ENCODE measurements at regions of chr18 and their contacts with region 1.

Region 1: DNA sequence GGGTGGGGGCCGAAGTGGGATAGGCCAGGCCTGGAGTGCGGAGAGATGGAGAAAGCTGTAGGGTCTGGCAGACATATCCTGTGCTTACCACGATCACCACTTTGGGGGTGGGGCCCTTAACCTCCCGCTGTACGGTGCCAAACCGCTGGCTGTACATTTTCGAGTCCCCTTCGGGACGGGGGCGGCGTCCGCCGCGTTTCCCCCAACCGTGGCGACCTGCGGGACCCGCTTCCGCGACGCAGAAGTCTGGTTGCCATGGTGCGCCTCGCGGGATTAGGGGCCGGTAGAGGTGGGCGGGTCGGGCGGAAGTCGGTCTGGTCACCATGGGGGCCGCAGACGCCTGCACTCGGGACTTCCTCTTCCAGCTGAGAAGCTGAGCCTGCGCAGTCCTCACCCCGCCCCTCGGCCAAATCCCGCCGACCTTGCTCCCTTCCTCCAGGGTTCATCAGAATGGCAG is at the start of gene CFAP53:
- DNase-seq: peak; percentile 84
- ATAC-seq: peak; percentile 100
- H3K4me3 ChIP-seq: peak within 1 kb of the TSS; percentile 84
- H3K27ac ChIP-seq: peak within 1 kb of the TSS; percentile 21; the same call in 1 of the 2 replicates
- H3K4me1 ChIP-seq: no peaks in the 10 kb centered on the region
- H3K27me3 ChIP-seq: no peaks in the 10 kb centered on the region
- CTCF ChIP-seq: no peak
- POLR2A ChIP-seq: peak; percentile 21; the same call in 1 of the 2 replicates
- RAD21 ChIP-seq: no peak
- total RNA-seq, gene CFAP53: under 0.01 TPM in 2 replicates

Region 2: GRCh38 chr18:48859311-48860268 is 1406.7 kb before region 1 on chr18:
- CTCF ChIA-PET with region 1: no interaction called
- POLR2A ChIA-PET with region 1: interaction called, 19 read pairs
- dilution Hi-C with region 1: no loop called
- in situ Hi-C with region 1: no loop called
- intact Hi-C with region 1: no loop called
- DNase-seq: no peak
- ATAC-seq: no peak
- H3K4me3 ChIP-seq: no peak overlapping the region
- H3K27ac ChIP-seq: no peak overlapping the region
- H3K4me1 ChIP-seq: peaks cover 4% of the 10 kb centered on the region; the same call in 1 of the 2 replicates
- H3K27me3 ChIP-seq: no peaks in the 10 kb centered on the region
- CTCF ChIP-seq: no peak
- POLR2A ChIP-seq: no peak
- RAD21 ChIP-seq: no peak

Region 3: DNA sequence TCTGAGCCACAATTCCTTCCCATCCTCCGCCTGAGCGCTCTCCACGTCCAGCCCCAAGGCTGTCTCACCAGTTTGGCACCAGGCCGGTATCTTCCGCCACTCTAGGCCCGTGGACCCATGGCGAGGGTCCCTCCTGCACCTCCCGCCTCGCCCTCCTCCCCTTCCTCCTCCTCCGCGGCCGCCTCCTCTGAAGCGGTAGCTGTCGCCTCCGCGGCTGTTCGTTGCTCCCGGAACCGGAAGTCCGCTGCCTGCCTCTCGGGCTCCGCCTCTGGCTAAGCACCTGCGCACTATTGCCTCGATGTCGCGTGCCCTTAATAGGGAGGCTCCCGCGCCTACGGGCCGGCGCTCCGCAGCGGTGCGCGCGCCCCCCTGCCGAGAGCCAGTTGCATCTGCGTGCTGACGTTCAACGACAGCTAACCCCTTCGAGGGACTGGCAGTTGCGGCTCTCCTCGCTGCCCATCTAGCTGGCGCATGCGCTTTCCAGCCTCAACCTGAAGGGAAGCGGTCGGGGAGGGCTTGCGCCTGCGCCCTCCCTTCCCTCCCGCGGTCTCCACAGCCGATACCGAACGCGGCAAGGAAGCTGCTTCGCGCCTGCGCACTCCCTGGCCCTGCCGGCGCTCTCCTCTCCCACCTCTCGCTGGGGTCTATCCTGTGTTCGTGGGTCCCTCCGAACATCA is 15.2 kb after region 1 on chr18 and contains the start of gene MBD1:
- CTCF ChIA-PET with region 1: no interaction called
- POLR2A ChIA-PET with region 1: no interaction called
- dilution Hi-C with region 1: no loop called
- in situ Hi-C with region 1: no loop called
- intact Hi-C with region 1: loop called (anchors 1 kb)
- DNase-seq: peak; percentile 99
- ATAC-seq: peak; percentile 94
- H3K4me3 ChIP-seq: peak within 1 kb of the TSS; percentile 80
- H3K27ac ChIP-seq: peak within 1 kb of the TSS; percentile 94
- H3K4me1 ChIP-seq: peaks cover 9% of the 10 kb centered on the region
- H3K27me3 ChIP-seq: no peaks in the 10 kb centered on the region
- CTCF ChIP-seq: 0 out of 2 replicates have a peak, but pooled peaks have one; percentile 20
- POLR2A ChIP-seq: peak; percentile 87
- RAD21 ChIP-seq: no peak
- total RNA-seq, gene MBD1: 31.7 TPM in 2 replicates

Region 4: GRCh38 chr18:51833850-51834249 is 1567.6 kb after region 1 on chr18:
- CTCF ChIA-PET with region 1: no interaction called
- POLR2A ChIA-PET with region 1: no interaction called
- dilution Hi-C with region 1: no loop called
- in situ Hi-C with region 1: no loop called
- intact Hi-C with region 1: no loop called
- DNase-seq: no peak
- ATAC-seq: no peak
- H3K4me3 ChIP-seq: no peak overlapping the region
- H3K27ac ChIP-seq: no peak overlapping the region
- H3K4me1 ChIP-seq: no peaks in the 10 kb centered on the region
- H3K27me3 ChIP-seq: no peaks in the 10 kb centered on the region
- CTCF ChIP-seq: no peak
- POLR2A ChIP-seq: no peak
- RAD21 ChIP-seq: no peak

Measured in IMR-90 (cell line).